Heart right ventricle (tissue), 16 donors: ENCODE measurements at regions of chr14 and their contacts with region 1.

Region 1: GRCh38 chr14:23006544-23007419 is 3.2 kb downstream of the C14orf93 start:
- DNase-seq: peak; percentile 94 to 98
- ATAC-seq: peak; percentile 99 to 100 (median 99)
- H3K4me3 ChIP-seq: peak overlapping the region; percentile 53 to 91 (median 75)
- H3K27ac ChIP-seq: peak overlapping the region; percentile 86 to 98 (median 96)
- H3K4me1 ChIP-seq: peaks cover 3 to 39% (median 25%) of the 10 kb centered on the region in 9 donors
- H3K27me3 ChIP-seq: no peaks in the 10 kb centered on the region
- CTCF ChIP-seq: peak in 4 of 9 donors; percentile 32 to 50 (median 42)

Region 2: DNA sequence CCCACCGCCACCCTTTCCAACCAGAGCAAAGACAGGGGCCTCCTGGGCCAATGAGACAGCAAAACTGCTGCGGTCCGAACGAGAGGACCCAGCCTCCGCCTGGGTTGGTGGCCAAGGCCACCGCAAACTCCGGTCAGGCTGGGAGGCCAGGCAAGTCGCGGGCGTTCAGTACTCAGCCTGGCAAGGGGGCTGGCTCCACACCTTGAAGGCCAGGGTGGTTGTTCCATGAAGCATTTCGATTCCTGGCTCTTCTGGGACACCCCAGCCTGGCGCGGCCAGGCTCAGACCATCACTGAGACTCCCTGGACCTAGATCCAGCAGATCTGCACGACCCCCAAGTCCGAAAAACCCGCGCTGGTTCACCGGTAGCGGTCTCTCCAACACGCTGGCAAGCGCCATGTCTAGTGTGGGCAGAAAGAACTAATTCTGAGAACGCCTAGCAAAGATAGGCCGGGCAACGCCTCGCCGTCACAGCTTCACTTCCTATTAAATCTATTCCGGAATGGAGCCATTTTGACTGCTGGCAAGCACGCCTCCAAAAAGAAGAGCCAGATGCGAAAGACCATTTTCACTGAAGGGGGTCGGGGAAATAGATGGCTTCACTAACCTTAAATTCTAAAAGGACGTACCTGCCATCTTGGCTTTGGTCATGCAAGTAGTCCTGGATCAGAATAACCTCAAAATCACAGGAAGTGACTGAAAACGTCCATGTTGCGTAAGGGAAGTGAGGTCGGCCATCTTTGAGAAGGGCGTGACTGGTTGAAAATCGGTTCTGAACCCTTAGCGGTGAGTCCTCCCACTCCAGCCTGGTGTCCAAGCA is 27.9 kb after region 1 on chr14 and contains the start of gene PSMB5:
- intact Hi-C with region 1: loop called in 4 of 10 experiments (anchors 2 kb)
- DNase-seq: peak; percentile 81 to 94
- ATAC-seq: peak; percentile 96 to 99 (median 98)
- H3K4me3 ChIP-seq: peak within 1 kb of the TSS; percentile 63 to 97 (median 82)
- H3K27ac ChIP-seq: peak within 1 kb of the TSS; percentile 87 to 98 (median 94)
- H3K4me1 ChIP-seq: peaks cover 0 to 24% (median 16%) of the 10 kb centered on the region in 9 donors
- H3K27me3 ChIP-seq: no peaks in the 10 kb centered on the region
- CTCF ChIP-seq: peak in 1 of 9 donors; percentile 17
- total RNA-seq, gene PSMB5: 111 to 141 (median 122) TPM